Mammary epithelial cell (primary cell): ENCODE measurements at regions of chr2 and their contacts with region 1.

Region 1: GRCh38 chr2:237298151-237299118 is 115.5 kb downstream of the COL6A3 start:
- DNase-seq: peak; percentile 98
- H3K4me3 ChIP-seq: no peak overlapping the region
- H3K27ac ChIP-seq: peak overlapping the region; percentile 75
- H3K4me1 ChIP-seq: peaks cover 40% of the 10 kb centered on the region
- H3K27me3 ChIP-seq: no peaks in the 10 kb centered on the region
- CTCF ChIP-seq: no peak

Region 2: GRCh38 chr2:237256887-237257286 is 41.5 kb before region 1 on chr2:
- CTCF ChIA-PET with region 1: interaction called, 4 read pairs
- dilution Hi-C with region 1: loop called (anchors 5 kb)
- in situ Hi-C with region 1: no loop called
- intact Hi-C with region 1: no loop called
- DNase-seq: no peak
- H3K4me3 ChIP-seq: no peak overlapping the region
- H3K27ac ChIP-seq: no peak overlapping the region
- H3K4me1 ChIP-seq: peaks cover 14% of the 10 kb centered on the region
- H3K27me3 ChIP-seq: no peaks in the 10 kb centered on the region
- CTCF ChIP-seq: no peak

Region 3: DNA sequence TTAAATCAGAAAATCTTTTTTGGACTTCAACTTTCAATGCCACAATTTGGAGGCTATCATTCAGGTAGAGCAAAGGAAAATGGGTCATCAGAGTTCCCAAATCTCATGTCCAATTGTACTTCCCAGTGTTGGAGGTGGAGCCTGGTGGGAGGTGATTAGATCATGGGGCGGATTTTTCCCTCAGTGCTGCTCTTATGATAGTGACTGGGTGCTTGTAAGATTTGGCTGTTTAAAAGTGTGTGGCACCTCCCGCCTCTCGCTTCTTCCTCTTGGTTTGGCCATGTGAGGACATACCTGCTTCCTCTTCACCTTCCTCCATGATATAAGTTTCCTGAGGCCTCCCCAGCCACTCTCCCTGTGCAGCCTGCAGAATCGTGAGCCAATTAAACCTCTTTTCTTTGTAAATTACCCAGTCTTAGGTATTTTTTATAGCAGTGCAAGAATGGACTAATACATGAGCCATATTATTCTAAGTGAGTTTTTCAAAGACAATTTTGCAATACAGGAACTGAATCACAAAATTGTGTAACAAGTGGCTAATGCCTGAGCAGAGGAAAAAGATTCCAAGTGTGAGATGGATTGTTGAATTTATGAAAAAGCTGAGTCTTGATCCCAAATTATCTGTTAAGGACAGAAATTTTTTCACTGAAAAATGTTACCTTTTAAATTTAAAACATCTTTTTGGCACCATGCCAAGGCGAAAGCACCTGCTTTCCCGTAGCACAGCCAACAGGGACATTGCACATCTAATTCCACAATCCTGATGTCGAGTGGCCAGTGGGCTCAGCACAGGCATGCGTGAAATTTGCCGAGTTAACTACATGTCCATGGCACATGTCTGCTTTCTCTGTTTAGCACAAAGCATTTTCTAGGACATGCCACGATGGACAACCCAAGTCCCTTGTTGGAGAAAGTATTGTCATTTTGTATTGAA is 35.3 kb before region 1 on chr2:
- CTCF ChIA-PET with region 1: interaction called, 4 read pairs
- dilution Hi-C with region 1: loop called (anchors 5 kb)
- in situ Hi-C with region 1: no loop called
- intact Hi-C with region 1: loop called (anchors 1 kb)
- DNase-seq: peak; percentile 81
- H3K4me3 ChIP-seq: no peak overlapping the region
- H3K27ac ChIP-seq: no peak overlapping the region
- H3K4me1 ChIP-seq: peaks cover 13% of the 10 kb centered on the region
- H3K27me3 ChIP-seq: no peaks in the 10 kb centered on the region
- CTCF ChIP-seq: no peak